HepG2 (cell line): ENCODE measurements at regions of chr7 and their contacts with region 1.

Region 1: GRCh38 chr7:7672545-7673239 is 32.1 kb downstream of the UMAD1 start:
- DNase-seq: no peak
- ATAC-seq: no peak
- H3K4me3 ChIP-seq: no peak overlapping the region
- H3K27ac ChIP-seq: no peak overlapping the region
- H3K4me1 ChIP-seq: no peaks in the 10 kb centered on the region
- H3K27me3 ChIP-seq: no peaks in the 10 kb centered on the region
- CTCF ChIP-seq: no peak
- EP300 ChIP-seq: no peak
- POLR2A ChIP-seq: no peak
- RAD21 ChIP-seq: no peak

Region 2: DNA sequence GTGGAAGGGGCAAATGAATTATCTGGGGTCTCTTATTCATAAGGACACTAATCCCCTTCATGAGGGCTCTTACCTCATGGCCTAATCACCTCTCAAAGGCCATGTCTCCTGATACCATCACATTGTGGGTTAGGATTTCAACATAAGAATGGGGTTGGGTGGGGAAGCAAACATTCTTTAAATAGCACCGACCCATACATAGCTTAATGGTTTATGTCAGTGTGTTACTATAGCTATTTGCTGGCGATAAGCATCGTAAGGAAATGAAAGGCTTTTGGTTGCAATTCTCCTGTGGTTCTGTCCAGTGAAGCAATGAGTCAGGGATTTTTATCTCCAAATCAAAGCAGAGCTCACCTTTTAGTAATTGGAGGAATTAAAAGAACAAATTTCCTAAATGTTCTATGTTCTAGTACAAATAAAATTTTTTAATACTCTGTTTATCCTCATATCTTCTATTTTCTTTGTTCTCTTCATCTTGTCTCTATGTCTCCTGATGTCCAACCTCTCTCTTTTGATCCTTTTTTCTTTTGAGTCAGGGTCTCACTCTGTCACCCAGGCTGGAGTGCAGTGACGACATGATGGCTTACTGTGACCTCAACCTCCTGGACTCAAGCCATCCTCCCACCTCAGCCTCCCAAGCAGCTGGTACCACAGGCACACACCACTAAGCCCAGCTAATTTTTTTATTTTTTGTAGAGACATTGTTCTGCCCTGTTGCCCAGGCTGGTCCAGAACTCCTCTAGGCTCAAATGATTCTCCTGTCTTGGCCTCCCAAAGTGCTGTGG is 238.9 kb after region 1 on chr7:
- CTCF ChIA-PET with region 1: no interaction called
- POLR2A ChIA-PET with region 1: no interaction called
- in situ Hi-C with region 1: no loop called
- intact Hi-C with region 1: loop called (anchors 10 kb)
- DNase-seq: peak; percentile 94
- ATAC-seq: peak; percentile 89
- H3K4me3 ChIP-seq: no peak overlapping the region
- H3K27ac ChIP-seq: no peak overlapping the region
- H3K4me1 ChIP-seq: peaks cover 23% of the 10 kb centered on the region
- H3K27me3 ChIP-seq: no peaks in the 10 kb centered on the region
- CTCF ChIP-seq: no peak
- EP300 ChIP-seq: peak in 1 of 2 experiments; percentile 54; a peak in 2 of 4 replicates
- POLR2A ChIP-seq: no peak
- RAD21 ChIP-seq: no peak